Activated CD8-positive, alpha-beta T cell treated with anti-CD3 and anti-CD28 coated beads for 36 hours (primary cell): ENCODE measurements at regions of chr16 and their contacts with region 1.

Region 1: DNA sequence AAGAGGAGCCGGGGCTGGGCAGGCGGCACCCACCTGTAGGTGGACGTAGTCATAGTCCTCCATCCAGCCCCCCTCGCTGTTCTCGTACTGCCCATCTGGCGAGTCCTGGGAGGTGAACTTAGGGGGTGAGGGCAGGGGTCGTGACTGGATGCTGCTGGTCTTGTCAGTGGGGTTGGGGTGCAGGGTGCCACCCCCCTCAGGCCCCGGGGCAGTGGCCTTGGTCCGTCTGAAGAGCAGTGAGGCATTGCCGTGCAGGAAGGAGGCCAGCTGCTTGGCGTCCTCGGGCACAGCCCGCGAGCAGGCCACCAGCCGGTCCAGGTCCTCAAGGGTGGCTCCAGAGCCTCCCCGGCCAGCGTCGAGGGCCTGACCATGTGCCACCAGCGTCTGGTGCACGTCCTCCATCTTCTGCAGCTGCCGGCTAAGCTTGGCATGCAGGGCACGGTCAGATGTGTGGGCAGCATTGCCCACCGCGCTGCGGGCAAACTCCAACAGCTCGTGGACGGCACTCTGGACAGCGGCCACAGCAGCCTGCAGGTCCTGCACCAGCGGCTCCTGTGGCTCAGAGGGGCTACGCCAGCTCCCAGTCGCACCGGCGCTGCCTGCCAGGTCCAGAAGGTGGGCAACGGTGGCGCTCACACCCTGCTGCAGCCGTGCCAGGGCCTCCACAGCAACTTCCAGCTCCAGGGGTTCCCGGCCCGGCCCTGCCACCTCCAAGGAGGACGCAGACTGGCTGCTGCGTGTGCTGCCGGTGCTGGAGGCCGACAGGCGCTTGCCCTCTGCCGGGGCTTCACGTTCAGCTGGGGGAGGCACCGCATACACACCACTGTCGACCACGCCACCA is 16.3 kb downstream of the CTRB1 start:
- DNase-seq: no peak
- ATAC-seq: no peak
- H3K4me3 Mint-ChIP-seq: no peak overlapping the region
- H3K27ac Mint-ChIP-seq: no peak overlapping the region
- H3K4me1 Mint-ChIP-seq: peaks cover 5% of the 10 kb centered on the region
- H3K27me3 Mint-ChIP-seq: peaks cover 1% of the 10 kb centered on the region
- CTCF ChIP-seq: no peak

Region 2: GRCh38 chr16:75087375-75087979 is 147.6 kb before region 1 on chr16:
- CTCF ChIA-PET with region 1: no interaction called
- POLR2A ChIA-PET with region 1: no interaction called
- intact Hi-C with region 1: no loop called
- DNase-seq: no peak
- ATAC-seq: no peak
- H3K4me3 Mint-ChIP-seq: no peak overlapping the region
- H3K27ac Mint-ChIP-seq: no peak overlapping the region
- H3K4me1 Mint-ChIP-seq: peaks cover 8% of the 10 kb centered on the region
- H3K27me3 Mint-ChIP-seq: no peaks in the 10 kb centered on the region
- CTCF ChIP-seq: no peak

Region 3: GRCh38 chr16:75361936-75362335 is 126.9 kb after region 1 on chr16:
- CTCF ChIA-PET with region 1: interaction called, 18 read pairs
- POLR2A ChIA-PET with region 1: no interaction called
- intact Hi-C with region 1: no loop called
- DNase-seq: no peak
- ATAC-seq: no peak
- H3K4me3 Mint-ChIP-seq: no peak overlapping the region
- H3K27ac Mint-ChIP-seq: no peak overlapping the region
- H3K4me1 Mint-ChIP-seq: no peaks in the 10 kb centered on the region
- H3K27me3 Mint-ChIP-seq: no peaks in the 10 kb centered on the region
- CTCF ChIP-seq: no peak

Region 4: DNA sequence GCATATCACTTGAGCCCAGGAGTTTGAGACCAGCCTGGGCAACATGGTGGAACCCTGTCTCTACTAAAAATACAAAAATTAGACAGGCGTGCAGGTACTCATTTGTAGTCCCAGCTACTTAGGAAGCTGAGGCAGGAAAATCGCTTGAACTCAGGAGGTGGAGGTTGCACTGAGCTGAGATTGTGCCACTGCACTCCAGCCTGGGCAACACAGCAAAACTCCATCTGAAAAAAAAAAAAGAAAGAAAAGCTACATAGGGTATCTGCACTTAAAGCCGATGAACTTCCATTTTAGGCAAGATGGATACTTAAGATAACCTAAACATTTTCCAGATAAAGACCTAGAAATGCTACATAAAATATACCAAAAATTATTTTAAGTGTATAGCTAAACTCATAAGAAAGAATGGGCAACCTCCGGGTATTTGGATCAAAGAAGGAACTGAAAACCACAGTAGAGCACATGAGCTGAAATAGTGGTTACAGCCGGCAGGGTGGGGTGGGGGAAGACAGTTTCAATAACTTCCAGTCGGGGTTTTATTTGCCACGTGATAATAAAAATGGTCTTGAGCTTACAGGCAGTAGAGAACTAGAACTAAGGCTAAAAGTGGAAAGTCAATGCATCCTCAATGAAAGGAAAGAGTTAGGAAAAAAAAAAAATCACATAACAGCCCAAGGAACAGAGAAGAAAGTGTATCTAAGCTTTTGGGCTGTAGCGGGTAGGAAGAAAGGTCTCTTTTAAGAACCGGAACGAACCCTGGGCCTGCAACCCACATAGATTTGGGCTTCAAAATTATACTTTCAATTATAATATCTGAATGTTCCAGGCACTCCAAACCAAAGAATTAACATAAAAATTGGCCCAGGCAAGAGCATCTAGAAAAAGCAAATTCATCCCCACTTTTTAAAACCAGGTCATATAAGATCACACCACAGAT is 145.1 kb after region 1 on chr16:
- CTCF ChIA-PET with region 1: interaction called, 50 read pairs
- POLR2A ChIA-PET with region 1: interaction called, 3 read pairs
- intact Hi-C with region 1: loop called (anchors 2 kb)
- DNase-seq: peak; percentile 66
- ATAC-seq: peak; percentile 71
- H3K4me3 Mint-ChIP-seq: peak overlapping the region; percentile 6
- H3K27ac Mint-ChIP-seq: no peak overlapping the region
- H3K4me1 Mint-ChIP-seq: peaks cover 47% of the 10 kb centered on the region
- H3K27me3 Mint-ChIP-seq: peaks cover 2% of the 10 kb centered on the region
- CTCF ChIP-seq: no peak

Region 5: DNA sequence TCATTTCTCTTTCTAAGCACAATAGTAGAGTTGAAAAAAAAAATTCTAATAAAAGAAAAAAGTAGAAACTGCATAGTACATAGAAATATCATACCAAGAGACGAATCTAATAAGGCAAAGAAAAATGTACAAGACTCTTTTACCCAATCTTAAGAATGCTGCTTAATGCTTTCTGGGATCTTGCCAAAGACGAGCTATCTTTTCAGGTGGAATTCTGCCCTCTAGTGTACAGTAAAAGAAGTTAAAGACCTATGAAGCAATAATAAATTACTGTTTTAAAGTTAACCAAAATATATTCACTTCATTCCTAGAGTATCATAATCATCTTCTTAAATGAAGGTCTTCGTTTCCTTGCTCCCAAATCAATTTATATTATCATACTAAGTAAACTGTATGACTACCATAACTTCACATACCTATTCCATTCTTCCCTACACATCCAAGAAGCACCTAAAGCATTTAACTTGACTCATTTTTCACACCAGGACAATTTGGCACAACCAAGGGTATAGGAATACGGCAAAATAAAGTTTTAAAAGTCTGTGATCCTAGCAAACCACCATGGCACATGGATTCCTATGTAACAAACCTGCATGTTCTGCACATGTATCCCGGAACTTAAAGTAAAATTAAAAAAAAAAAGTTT is 150.6 kb after region 1 on chr16:
- CTCF ChIA-PET with region 1: interaction called, 50 read pairs
- POLR2A ChIA-PET with region 1: interaction called, 5 read pairs
- intact Hi-C with region 1: loop called (anchors 2 kb)
- DNase-seq: no peak
- ATAC-seq: peak; percentile 37
- H3K4me3 Mint-ChIP-seq: no peak overlapping the region
- H3K27ac Mint-ChIP-seq: no peak overlapping the region
- H3K4me1 Mint-ChIP-seq: peaks cover 16% of the 10 kb centered on the region
- H3K27me3 Mint-ChIP-seq: peaks cover 2% of the 10 kb centered on the region
- CTCF ChIP-seq: peak; percentile 72

Region 6: GRCh38 chr16:75392911-75393310 is 157.8 kb after region 1 on chr16:
- CTCF ChIA-PET with region 1: interaction called, 31 read pairs
- POLR2A ChIA-PET with region 1: interaction called, 5 read pairs
- intact Hi-C with region 1: no loop called
- DNase-seq: no peak
- ATAC-seq: no peak
- H3K4me3 Mint-ChIP-seq: no peak overlapping the region
- H3K27ac Mint-ChIP-seq: no peak overlapping the region
- H3K4me1 Mint-ChIP-seq: no peaks in the 10 kb centered on the region
- H3K27me3 Mint-ChIP-seq: no peaks in the 10 kb centered on the region
- CTCF ChIP-seq: no peak

Region 7: GRCh38 chr16:75402821-75403475 is 167.9 kb after region 1 on chr16:
- CTCF ChIA-PET with region 1: interaction called, 22 read pairs
- POLR2A ChIA-PET with region 1: no interaction called
- intact Hi-C with region 1: loop called (anchors 5 kb)
- DNase-seq: peak; percentile 14
- ATAC-seq: peak; percentile 74
- H3K4me3 Mint-ChIP-seq: no peak overlapping the region
- H3K27ac Mint-ChIP-seq: no peak overlapping the region
- H3K4me1 Mint-ChIP-seq: peaks cover 19% of the 10 kb centered on the region
- H3K27me3 Mint-ChIP-seq: no peaks in the 10 kb centered on the region
- CTCF ChIP-seq: peak; percentile 54

Region 8: DNA sequence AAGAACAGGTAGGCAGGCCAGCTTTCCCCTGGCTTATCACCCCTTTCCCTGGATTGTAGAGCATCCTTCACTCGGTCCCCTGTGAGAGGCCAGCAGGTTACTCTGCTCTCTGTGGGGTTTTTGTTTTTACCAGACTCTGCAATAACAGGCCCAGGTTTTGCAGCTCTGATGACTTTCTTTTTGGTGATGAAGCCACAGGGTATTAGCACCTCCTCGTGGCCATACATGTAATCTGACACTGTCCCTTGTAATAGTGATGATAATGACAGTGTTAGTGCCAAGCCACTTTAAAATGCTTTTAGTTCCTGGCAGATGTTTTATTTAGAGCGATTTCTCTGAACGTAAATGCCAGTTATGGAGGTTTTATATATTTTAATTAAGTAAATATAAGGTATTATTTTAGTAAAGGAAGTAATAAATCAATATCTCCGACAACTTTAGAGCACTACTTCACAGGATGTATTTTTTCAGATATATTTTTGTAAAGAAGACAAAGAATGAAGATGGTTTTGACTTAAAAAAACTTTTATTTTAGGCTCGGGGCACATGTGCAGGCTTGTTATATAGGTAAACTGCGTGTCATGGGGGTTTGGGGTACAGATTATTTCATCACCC is 529.2 kb after region 1 on chr16:
- CTCF ChIA-PET with region 1: interaction called, 11 read pairs
- POLR2A ChIA-PET with region 1: no interaction called
- intact Hi-C with region 1: no loop called
- DNase-seq: peak; percentile 76
- ATAC-seq: peak; percentile 94
- H3K4me3 Mint-ChIP-seq: no peak overlapping the region
- H3K27ac Mint-ChIP-seq: no peak overlapping the region
- H3K4me1 Mint-ChIP-seq: peaks cover 11% of the 10 kb centered on the region
- H3K27me3 Mint-ChIP-seq: no peaks in the 10 kb centered on the region
- CTCF ChIP-seq: peak; percentile 84